GM12878 (cell line): ENCODE measurements at regions of chr17 and their contacts with region 1.

Region 1: GRCh38 chr17:75173526-75173925 is 9.2 kb downstream of the SUMO2 start:
- DNase-seq: no peak
- ATAC-seq: no peak
- H3K4me3 ChIP-seq: no peak overlapping the region
- H3K27ac ChIP-seq: no peak overlapping the region
- H3K4me1 ChIP-seq: no peaks in the 10 kb centered on the region
- H3K27me3 ChIP-seq: no peaks in the 10 kb centered on the region
- CTCF ChIP-seq: no peak
- EP300 ChIP-seq: no peak
- POLR2A ChIP-seq: no peak
- RAD21 ChIP-seq: no peak

Region 2: GRCh38 chr17:75024686-75025397 is 148.7 kb before region 1 on chr17:
- CTCF ChIA-PET with region 1: interaction called, 3 read pairs
- POLR2A ChIA-PET with region 1: interaction called, 10 read pairs
- RAD21 ChIA-PET with region 1: no interaction called
- SMC1A ChIA-PET with region 1: no interaction called
- in situ Hi-C with region 1: no loop called
- intact Hi-C with region 1: no loop called
- DNase-seq: no peak
- ATAC-seq: no peak
- H3K4me3 ChIP-seq: no peak overlapping the region
- H3K27ac ChIP-seq: no peak overlapping the region
- H3K4me1 ChIP-seq: no peaks in the 10 kb centered on the region
- H3K27me3 ChIP-seq: no peaks in the 10 kb centered on the region
- CTCF ChIP-seq: no peak
- EP300 ChIP-seq: no peak
- POLR2A ChIP-seq: 0 out of 2 replicates have a peak, but pooled peaks have one; percentile 19
- RAD21 ChIP-seq: no peak

Region 3: GRCh38 chr17:75069783-75070182 is 103.7 kb before region 1 on chr17:
- CTCF ChIA-PET with region 1: interaction called, 4 read pairs
- POLR2A ChIA-PET with region 1: no interaction called
- RAD21 ChIA-PET with region 1: interaction called, 12 read pairs
- SMC1A ChIA-PET with region 1: interaction called, 3 read pairs
- in situ Hi-C with region 1: no loop called
- intact Hi-C with region 1: no loop called
- DNase-seq: no peak
- ATAC-seq: peak; percentile 68
- H3K4me3 ChIP-seq: no peak overlapping the region
- H3K27ac ChIP-seq: no peak overlapping the region
- H3K4me1 ChIP-seq: peaks cover 15% of the 10 kb centered on the region
- H3K27me3 ChIP-seq: no peaks in the 10 kb centered on the region
- CTCF ChIP-seq: peak in 2 of 3 experiments; percentile 35 to 50; a peak in 4 of 6 replicates
- EP300 ChIP-seq: no peak
- POLR2A ChIP-seq: no peak
- RAD21 ChIP-seq: 0 out of 2 replicates have a peak, but pooled peaks have one; percentile 24

Region 4: DNA sequence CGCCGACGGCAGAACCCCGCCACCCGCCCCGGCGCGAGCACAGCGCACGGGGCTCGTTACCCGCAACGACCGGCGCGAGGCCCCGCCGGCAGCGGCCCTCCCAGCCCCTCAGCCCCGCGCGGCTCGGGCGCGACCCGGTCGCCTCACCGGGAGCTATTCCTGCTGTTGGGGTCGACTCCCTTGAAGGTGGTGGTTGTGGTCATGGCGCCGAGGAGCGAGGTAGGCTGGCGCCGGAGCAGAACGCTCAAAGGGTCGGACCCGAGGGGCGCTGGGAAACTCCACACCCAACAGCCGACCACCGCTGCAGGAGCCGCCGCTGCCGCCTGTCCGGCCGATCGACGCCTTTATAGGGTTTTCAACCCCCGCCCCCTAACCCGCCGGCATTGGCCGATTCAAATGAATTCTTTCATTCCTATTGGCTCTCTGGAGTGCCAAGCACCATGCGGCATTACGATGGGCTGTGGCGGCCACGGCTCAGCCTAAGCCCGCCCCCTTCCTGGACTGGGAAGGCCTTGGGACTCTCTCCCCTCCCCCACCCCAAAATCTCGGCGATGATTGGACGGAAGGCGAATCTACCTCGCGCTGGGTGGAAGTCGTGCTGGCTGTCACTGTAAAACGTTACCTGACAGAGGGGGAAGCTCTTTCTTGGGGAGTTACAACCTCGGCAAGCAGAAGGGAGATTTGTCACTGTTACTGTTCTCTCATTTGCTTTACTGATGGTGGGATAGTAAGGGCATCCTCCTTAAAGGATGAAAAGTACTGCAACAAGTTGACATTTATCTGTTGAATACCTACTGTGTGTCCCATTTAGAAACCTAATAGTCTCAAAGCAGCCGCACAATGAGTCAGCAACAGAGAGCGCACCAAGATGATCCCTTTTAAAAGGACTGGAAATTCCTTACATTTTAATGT is 19.1 kb before region 1 on chr17 and contains the start of gene JPT1:
- CTCF ChIA-PET with region 1: interaction called, 10 read pairs
- POLR2A ChIA-PET with region 1: interaction called, 8 read pairs
- RAD21 ChIA-PET with region 1: no interaction called
- SMC1A ChIA-PET with region 1: interaction called, 11 read pairs
- in situ Hi-C with region 1: no loop called
- intact Hi-C with region 1: no loop called
- DNase-seq: peak; percentile 97
- ATAC-seq: peak; percentile 98
- H3K4me3 ChIP-seq: peak within 1 kb of the TSS; percentile 90
- H3K27ac ChIP-seq: peak within 1 kb of the TSS; percentile 90
- H3K4me1 ChIP-seq: peaks cover 6% of the 10 kb centered on the region
- H3K27me3 ChIP-seq: no peaks in the 10 kb centered on the region
- CTCF ChIP-seq: no peak
- EP300 ChIP-seq: no peak
- POLR2A ChIP-seq: peak; percentile 99
- RAD21 ChIP-seq: no peak
- polyA plus RNA-seq, gene JPT1: 95.9 to 140 TPM

Region 5: GRCh38 chr17:75199886-75200618 is 26.5 kb after region 1 on chr17:
- CTCF ChIA-PET with region 1: interaction called, 57 read pairs
- POLR2A ChIA-PET with region 1: interaction called, 4 read pairs
- RAD21 ChIA-PET with region 1: interaction called, 9 read pairs
- SMC1A ChIA-PET with region 1: interaction called, 11 read pairs
- in situ Hi-C with region 1: no loop called
- intact Hi-C with region 1: no loop called
- DNase-seq: no peak
- ATAC-seq: no peak
- H3K4me3 ChIP-seq: no peak overlapping the region
- H3K27ac ChIP-seq: no peak overlapping the region
- H3K4me1 ChIP-seq: no peaks in the 10 kb centered on the region; the same call in 1 of the 2 replicates
- H3K27me3 ChIP-seq: no peaks in the 10 kb centered on the region
- CTCF ChIP-seq: no peak
- EP300 ChIP-seq: no peak
- POLR2A ChIP-seq: no peak
- RAD21 ChIP-seq: no peak